ENCODE measurements at regions of chr21 and their contacts with region 1.

Region 1: DNA sequence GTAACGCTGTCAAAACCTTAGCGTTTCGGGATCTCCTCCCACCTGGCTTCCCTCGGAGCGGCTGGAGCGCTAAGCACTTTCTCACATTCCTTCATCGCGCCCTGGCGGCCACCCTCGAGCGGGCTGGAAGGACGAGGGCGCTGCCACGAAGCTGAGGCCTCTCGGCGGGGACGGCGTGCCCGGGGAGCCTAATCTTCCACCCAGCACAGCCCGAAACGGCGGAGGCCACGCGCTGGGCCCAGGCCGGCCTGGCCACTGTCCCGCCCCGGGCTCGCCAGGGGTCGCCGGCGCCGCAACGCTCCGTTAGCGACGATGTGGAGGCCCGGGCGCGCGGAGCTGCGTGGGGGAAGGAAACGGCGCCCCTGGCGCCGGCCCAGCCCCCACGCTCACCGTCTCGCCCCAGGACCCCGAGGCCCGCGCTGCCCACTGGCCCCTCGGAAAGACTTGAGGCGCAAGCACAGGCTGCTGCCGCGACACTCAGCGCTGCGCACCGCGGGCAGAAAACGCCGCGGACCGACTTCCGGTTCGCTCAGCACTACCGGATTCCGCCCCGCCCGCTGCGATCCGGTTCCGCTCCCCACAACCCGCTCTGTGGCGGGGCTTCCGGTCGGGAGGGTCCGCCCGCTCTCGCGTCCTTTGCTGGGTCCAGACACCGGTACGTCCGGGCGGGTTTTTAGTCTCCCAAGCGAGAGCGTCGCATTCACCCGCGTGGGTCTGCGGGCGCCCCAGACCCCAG is at the start of gene YBEY:
- DNase-seq: peak; percentile 94
- ATAC-seq: peak; percentile 97
- total RNA-seq, gene YBEY: 15.5 to 17.5 TPM

Region 2: DNA sequence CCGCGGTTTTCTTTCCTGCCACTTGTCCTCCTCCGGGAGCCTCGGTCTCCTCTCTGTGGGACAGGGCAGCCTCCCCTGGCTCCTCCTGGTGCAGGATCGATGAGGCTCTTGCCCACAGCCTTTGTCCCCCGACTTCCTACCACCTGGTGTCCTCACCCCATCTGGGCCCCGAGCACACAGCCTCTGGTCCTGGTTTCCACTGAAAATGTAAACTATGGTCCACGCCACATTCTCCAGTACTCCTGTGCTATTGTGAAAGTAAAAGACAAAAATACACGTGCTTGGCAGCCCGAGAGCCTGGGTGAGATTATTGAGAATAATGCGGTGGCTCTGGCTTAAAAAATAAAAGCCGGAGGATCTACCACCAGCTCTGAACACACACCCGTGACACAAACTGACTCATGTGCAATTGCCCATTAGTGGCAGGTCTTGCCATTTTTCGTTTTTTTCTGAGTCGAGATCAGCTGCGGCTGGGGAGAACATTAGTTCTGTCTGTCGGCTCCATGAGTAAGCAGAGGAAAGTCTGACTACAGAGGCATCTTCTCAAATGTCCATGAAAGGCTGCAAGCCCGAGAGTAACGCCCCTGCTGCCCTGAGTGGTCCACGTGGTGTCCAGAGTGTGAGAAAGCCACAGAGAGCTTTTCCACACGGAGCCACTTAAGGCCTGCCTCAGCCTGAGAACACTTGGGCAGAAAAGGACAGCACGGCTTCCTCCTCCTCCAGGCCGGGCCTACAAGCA is 193.7 kb before region 1 on chr21:
- intact Hi-C with region 1: no loop called
- DNase-seq: peak; percentile 72
- ATAC-seq: peak; percentile 82 to 85

Region 3: GRCh38 chr21:46297338-46298271 is 11.7 kb after region 1 on chr21:
- intact Hi-C with region 1: loop called in 1 of 2 experiments (anchors 1 kb)
- DNase-seq: peak; percentile 54
- ATAC-seq: peak; percentile 18 to 19

Region 4: DNA sequence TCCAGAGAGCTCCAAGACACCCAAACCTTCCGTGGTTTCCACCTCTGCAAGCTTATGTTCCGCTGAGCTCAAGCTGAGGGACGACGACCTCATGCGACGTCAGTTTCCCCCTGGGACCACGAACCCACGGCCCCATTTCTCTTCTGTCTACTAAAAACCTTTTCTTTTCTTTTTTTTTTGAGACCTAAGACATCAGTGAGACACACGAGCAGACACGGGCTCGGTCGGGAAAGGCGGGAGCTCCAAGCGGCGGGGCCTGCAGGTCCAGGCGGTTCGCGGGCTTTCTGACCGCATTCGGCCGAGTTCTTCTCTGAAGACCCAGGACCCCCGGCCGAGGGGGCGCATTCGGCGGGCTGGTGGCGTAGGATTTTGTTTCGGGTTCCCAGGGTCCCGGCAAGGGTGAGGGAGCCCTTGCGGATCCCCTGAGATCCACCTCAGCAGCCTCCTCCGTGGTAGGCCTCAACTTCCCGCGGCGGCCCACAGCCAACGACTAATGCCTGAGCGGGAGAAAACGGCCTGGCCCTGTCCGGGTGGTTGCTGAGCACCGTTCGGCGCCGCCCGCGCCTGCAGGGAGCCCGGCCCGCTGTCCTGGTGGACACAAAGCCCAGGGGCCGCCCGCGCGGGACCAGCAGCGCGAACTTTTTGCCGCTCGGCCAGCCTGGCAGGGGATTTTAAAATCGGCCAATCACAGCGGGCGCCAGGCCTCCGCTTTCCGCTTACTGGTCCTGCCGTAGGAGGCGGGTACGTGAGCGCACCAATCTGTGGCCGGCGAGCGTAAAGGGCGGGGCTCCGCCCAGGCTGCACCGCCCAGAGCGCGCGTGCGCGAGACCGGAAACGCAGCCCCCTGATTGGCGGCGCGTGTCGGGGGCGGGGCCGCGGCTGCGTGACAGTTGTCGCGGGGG is 37.5 kb after region 1 on chr21 and contains the start of gene C21orf58:
- intact Hi-C with region 1: loop called in 1 of 2 experiments (anchors 2 kb)
- DNase-seq: peak; percentile 99
- ATAC-seq: peak; percentile 94 to 96
- total RNA-seq, gene C21orf58: 1.0 to 2.5 TPM